HEK293 (cell line): ENCODE measurements at regions of chrX and their contacts with region 1.

Region 1: GRCh38 chrX:120468825-120469525 is at the start of gene LAMP2:
- H3K4me3 ChIP-seq: peak within 1 kb of the TSS; percentile 82
- H3K27ac ChIP-seq: peak within 1 kb of the TSS; percentile 72
- H3K4me1 ChIP-seq: 0 out of 2 replicates have a peak, but pooled peaks cover 3% of the 10 kb centered on the region
- CTCF ChIP-seq: no peak

Region 2: GRCh38 chrX:120457766-120458180 is 11.2 kb before region 1 on chrX:
- CTCF ChIA-PET with region 1: interaction called, 28 read pairs
- POLR2A ChIA-PET with region 1: interaction called, 10 read pairs
- H3K4me3 ChIP-seq: no peak overlapping the region
- H3K27ac ChIP-seq: peak overlapping the region; percentile 2; the same call in 1 of the 2 replicates
- H3K4me1 ChIP-seq: peaks cover 22% of the 10 kb centered on the region
- CTCF ChIP-seq: no peak

Region 3: DNA sequence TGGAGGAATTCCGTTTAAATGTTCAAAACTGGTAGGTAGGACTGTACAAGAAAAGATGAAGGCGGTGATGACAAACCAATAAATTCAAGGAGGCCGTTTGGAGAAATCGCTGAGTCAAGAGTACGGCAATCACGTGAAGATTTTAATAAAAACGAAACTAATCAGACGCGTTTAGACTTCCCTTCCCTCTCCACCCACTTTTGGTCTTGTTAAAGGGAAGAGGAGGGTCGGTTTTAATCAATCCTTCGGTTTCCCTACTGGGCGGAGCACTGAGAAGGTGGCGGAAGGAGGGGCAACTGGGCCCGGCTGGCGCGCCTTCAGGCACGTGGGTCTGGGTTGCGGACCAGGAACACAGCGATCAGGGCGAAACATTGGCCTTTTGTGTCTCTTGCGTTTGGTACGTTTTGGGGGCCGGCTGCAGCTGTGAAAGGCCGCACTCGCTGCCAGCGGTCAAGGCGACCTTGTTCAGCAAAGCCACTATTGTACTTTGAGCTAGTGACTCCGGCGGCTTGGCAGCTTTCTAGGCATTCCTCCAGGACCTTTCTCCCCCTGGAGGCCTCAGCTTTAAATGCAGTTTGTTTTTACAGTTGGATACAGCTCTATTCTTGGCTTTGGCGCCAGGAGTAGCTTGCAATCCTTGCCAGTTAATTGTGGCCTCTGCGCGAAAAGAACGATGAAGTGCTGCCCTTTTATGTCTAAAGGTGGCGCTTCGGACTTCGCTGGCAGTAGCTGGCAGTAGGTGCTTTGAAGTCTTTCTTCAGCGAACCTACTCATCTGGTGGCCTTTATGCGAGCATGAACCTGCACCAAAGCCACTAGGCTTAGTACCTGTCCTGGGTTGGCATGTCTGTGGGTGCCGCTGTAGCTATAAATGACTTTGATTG is 16.9 kb after region 1 on chrX:
- CTCF ChIA-PET with region 1: interaction called, 5 read pairs
- POLR2A ChIA-PET with region 1: interaction called, 14 read pairs
- H3K4me3 ChIP-seq: peak overlapping the region; percentile 29
- H3K27ac ChIP-seq: peak overlapping the region; percentile 70
- H3K4me1 ChIP-seq: no peaks in the 10 kb centered on the region
- CTCF ChIP-seq: peak; percentile 80

Region 4: GRCh38 chrX:120726294-120726693 is 257.3 kb after region 1 on chrX:
- CTCF ChIA-PET with region 1: no interaction called
- POLR2A ChIA-PET with region 1: no interaction called
- H3K4me3 ChIP-seq: no peak overlapping the region
- H3K27ac ChIP-seq: no peak overlapping the region
- H3K4me1 ChIP-seq: no peaks in the 10 kb centered on the region
- CTCF ChIP-seq: no peak